Activated naive CD4-positive, alpha-beta T cell treated with anti-CD3 and anti-CD28 coated beads for 36 hours (primary cell): ENCODE measurements at regions of chr14 and their contacts with region 1.

Region 1: DNA sequence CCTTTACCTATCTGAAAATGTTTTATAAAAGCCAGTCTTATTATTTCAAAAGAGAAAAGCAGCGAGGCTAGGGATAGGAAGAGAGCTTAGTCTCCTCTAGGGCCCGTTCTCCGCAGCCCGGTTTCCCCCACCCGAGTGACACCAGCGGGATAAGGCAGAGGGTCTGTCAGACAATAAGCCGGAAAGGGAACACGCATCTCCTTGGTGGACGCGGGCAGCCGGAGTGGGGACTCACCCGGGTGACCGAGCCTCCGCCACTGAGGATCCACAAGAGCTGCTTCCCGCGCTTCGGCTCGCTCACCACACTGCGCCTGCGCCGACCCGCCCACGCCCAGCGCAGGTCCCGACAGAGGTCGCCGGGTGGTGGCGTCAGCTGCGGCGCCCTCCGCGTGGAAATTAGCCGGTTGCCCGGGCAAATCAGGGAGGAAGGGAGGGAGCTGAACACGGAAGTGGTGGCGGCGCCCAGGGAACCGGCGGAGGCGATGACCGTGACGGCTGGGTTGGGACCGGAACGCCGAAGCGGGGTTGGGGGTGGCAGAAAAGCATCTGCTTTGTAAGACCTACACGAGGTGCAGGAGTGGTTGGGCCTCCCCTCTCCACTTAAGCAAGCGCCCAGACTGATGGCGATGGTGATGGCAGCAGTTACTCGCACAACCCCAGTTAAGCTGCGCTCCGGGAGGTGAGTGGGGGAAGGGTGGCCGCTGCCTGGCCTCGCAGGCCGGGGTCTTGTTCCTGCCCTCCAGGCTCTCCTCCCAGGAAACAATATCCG is at the starts of genes SOCS4 and WDHD1:
- DNase-seq: peak; percentile 97
- H3K4me3 Mint-ChIP-seq: peak within 1 kb of the TSS; percentile 96
- H3K27ac Mint-ChIP-seq: peak within 1 kb of the TSS; percentile 92
- H3K4me1 Mint-ChIP-seq: peaks cover 46% of the 10 kb centered on the region
- H3K27me3 Mint-ChIP-seq: no peaks in the 10 kb centered on the region
- total RNA-seq, gene SOCS4: 17.7 to 17.9 TPM
- total RNA-seq, gene WDHD1: 61.1 to 62.9 TPM

Region 2: DNA sequence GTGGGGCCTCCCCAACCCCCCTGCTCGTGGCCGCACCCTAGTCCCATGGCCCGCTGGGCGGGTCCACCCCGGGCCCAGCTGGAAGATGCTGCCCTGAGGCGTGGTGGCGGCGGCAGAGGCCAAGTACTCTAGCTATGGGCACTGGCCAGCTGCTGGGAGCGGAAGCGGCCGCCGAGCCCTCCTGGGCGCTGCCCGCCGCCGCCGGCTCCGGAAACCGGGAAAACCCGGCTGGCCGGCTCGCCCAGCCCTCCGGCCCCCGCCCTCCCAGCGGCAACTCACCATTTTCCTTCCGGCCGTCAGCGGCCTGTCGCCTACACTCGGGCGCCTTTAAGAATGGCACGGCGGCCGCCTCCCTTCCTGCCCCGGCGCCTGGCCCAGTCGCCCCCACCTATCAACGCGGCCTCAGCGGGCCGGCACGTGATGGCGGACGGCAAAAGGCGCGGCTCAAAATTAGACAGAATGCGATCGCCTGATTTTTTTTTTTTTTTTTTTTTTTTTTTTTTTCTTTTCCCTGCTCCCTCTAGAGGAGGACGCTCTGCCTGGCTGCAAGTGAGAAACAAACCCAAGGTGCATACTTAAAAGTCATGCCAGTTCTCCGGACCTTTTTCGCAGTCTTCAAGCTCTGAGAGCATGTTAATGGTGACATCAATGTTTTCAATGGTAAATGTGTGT is 538.2 kb before region 1 on chr14 and contains the start of gene GMFB:
- CTCF ChIA-PET with region 1: no interaction called
- intact Hi-C with region 1: loop called (anchors 5 kb)
- DNase-seq: peak; percentile 91
- H3K4me3 Mint-ChIP-seq: peak within 1 kb of the TSS; percentile 85
- H3K27ac Mint-ChIP-seq: peak within 1 kb of the TSS; percentile 88
- H3K4me1 Mint-ChIP-seq: peaks cover 54% of the 10 kb centered on the region
- H3K27me3 Mint-ChIP-seq: no peaks in the 10 kb centered on the region
- total RNA-seq, gene GMFB: 29.5 to 33.4 TPM

Region 3: GRCh38 chr14:54881235-54881760 is 145.7 kb before region 1 on chr14:
- CTCF ChIA-PET with region 1: no interaction called
- intact Hi-C with region 1: loop called (anchors 1 kb)
- DNase-seq: peak; percentile 38
- H3K4me3 Mint-ChIP-seq: peak overlapping the region; percentile 78
- H3K27ac Mint-ChIP-seq: peak overlapping the region; percentile 96
- H3K4me1 Mint-ChIP-seq: peaks cover 34% of the 10 kb centered on the region
- H3K27me3 Mint-ChIP-seq: no peaks in the 10 kb centered on the region

Region 4: DNA sequence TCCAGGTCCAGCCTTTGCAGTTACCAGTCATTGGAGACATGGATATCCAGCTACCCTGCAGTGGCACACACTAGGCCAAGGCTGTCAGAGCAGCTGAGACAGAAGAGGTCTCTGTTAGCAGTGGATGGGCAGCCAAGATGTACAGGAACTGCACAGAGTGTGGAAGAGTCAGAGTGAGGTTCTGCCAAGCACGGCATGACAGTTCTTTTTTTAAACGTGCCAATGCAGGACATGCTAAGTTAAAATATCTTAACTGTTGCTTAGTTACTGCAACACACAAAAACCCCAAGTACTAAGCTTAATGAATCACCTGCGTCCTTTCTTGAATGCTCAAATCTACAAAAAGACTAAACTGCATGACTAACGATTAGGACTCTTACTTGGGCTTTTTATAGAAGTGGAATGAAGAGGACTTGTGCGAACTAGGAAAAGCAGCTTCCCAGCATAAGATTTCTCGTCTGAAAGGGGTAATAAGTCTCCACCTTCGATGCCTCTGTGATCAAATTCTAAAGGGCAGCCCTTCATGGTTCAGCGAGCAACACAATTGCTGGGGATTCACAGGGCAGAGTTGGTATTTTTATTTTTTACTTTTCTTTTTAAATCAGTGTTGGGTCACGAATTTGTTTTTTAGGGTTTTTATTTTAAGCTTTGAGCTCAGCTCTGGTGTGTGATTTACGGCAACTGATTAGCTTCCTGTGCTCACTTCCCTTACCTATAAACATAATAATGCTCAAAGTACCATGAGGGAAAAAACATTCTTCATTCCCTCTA is 45.1 kb after region 1 on chr14:
- CTCF ChIA-PET with region 1: no interaction called
- intact Hi-C with region 1: loop called (anchors 1 kb)
- DNase-seq: peak; percentile 72
- H3K4me3 Mint-ChIP-seq: peak overlapping the region; percentile 51
- H3K27ac Mint-ChIP-seq: peak overlapping the region; percentile 88
- H3K4me1 Mint-ChIP-seq: peaks cover 31% of the 10 kb centered on the region
- H3K27me3 Mint-ChIP-seq: no peaks in the 10 kb centered on the region

Region 5: DNA sequence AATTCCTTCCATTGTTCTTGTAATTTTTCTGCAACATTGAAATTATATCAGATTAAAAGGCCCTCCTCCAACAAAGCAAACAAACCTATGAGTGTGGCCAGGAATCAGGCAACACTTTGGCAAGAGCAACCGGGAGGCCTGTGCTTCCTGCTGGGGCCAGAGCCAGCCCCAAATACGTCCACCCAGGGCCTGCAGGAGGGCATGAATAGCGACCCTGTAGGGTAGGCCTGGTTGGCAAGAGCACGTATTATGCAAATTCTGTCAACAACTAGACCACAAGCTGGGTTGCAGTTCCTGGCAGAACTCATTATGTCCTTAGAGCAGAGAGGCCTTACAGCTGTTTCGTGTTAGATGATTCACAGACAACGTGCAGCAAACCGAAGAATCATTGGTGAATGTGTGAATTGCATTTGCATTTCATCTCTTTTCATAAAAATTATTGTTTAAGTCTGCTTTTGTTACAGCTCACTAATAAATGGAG is 75.2 kb after region 1 on chr14:
- CTCF ChIA-PET with region 1: no interaction called
- intact Hi-C with region 1: loop called (anchors 2 kb)
- DNase-seq: peak; percentile 70
- H3K4me3 Mint-ChIP-seq: no peak overlapping the region
- H3K27ac Mint-ChIP-seq: no peak overlapping the region
- H3K4me1 Mint-ChIP-seq: peaks cover 38% of the 10 kb centered on the region
- H3K27me3 Mint-ChIP-seq: no peaks in the 10 kb centered on the region